ENCODE measurements at regions of chr1 and their contacts with region 1.

Region 1: DNA sequence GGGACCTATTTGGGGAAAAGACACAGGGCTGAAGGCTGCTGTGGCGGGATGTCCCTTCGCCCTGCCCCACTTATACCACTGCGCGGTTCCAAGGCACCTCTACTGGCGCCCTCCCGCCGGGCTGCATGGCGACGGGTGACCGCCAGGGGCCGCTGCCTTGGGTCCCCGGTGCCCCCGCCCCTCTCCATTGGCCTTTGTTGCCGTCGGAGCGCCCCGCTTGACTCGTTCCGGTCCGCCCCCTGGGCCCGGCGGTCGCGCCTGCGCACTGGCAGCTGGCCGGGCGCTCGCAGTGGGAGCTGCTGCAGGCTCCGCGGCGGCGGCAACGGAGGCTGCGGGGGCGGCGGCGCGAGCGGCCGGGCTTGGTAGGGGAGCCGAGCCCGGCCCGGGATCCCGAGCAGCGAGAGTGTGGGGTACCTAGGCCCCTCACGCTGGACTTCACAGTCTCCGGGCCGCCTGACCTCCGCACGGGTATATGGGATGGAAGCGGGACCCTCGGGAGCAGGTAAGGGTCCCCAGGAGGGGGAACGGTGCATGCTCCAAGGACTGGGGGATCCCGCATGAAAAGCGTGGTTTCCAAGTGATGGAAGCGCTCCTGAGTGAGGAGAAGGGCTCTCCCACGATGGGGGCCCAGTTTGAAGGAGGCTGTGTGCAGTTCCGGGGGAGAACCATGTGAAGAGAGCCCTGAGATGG is at the start of gene AGO1:
- DNase-seq: peak; percentile 97 to 99 (median 99)
- ATAC-seq: peak; percentile 79
- H3K4me3 ChIP-seq: peak within 1 kb of the TSS; percentile 64
- H3K27ac ChIP-seq: peak within 1 kb of the TSS; percentile 73
- H3K4me1 ChIP-seq: peaks cover 47 to 72% of the 10 kb centered on the region in 2 experiments
- H3K27me3 ChIP-seq: no peaks in the 10 kb centered on the region
- CTCF ChIP-seq: peak; percentile 95 to 97 (median 97)
- EP300 ChIP-seq: no peak; the same call in 1 of the 2 replicates
- POLR2A ChIP-seq: peak; percentile 51; the same call in 1 of the 2 replicates
- RAD21 ChIP-seq: peak; percentile 56 to 73
- polyA plus RNA-seq, gene AGO1: 7.3 to 13.3 TPM

Region 2: DNA sequence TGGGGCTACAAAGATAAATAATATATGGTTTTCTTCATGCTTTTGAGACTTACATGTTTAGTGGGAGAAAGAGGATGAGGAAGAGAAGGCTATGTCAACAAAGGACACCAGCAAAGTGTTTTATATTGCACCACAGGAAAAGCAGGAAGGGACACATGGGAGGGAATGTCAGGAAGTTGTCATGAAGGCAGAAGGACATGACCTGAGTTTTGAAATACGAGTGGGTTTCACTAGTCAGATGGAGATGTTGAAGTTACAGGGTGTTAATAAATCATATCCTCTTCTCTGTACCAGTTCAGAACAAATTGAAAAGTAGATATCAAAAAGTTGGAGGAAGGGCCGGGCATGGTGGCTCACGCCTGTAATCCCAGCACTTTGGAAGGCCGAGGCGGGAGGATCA is 18.3 kb before region 1 on chr1:
- CTCF ChIA-PET with region 1: no interaction called
- POLR2A ChIA-PET with region 1: interaction called, 19 read pairs
- in situ Hi-C with region 1: no loop called
- intact Hi-C with region 1: loop called (anchors 1 kb)
- DNase-seq: no peak
- ATAC-seq: no peak
- H3K4me3 ChIP-seq: no peak overlapping the region
- H3K27ac ChIP-seq: no peak overlapping the region
- H3K4me1 ChIP-seq: peaks cover 0 to 6% of the 10 kb centered on the region in 2 experiments; a peak in 1 of 5 replicates
- H3K27me3 ChIP-seq: no peaks in the 10 kb centered on the region
- CTCF ChIP-seq: no peak
- EP300 ChIP-seq: no peak
- POLR2A ChIP-seq: no peak
- RAD21 ChIP-seq: no peak

Region 3: DNA sequence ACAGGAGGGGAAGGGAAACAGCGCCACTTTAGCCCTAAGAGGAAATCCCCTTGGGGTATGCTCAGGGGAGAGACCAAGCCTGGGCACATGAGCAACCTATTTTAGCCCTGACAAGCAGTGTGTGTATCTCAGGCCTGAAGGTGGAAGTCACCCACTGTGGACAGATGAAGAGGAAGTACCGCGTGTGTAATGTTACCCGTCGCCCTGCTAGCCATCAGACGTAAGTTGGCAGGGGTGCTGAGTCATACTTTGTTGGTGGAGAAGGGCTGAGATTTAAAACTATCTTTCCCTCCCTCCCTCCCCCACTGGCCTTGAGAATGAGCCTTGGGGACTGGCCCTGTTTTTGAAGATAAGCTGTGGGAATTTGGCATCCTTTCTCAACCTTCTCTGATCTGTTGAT is 11.1 kb after region 1 on chr1:
- CTCF ChIA-PET with region 1: no interaction called
- POLR2A ChIA-PET with region 1: interaction called, 12 read pairs
- in situ Hi-C with region 1: no loop called
- intact Hi-C with region 1: no loop called
- DNase-seq: peak; percentile 65 to 88 (median 74)
- ATAC-seq: peak; percentile 85
- H3K4me3 ChIP-seq: no peak overlapping the region
- H3K27ac ChIP-seq: peak overlapping the region; percentile 5; the same call in 1 of the 3 replicates
- H3K4me1 ChIP-seq: peaks cover 10 to 12% of the 10 kb centered on the region in 2 experiments; a peak in 4 of 5 replicates
- H3K27me3 ChIP-seq: no peaks in the 10 kb centered on the region
- CTCF ChIP-seq: no peak; a peak in 1 of 6 replicates
- EP300 ChIP-seq: no peak
- POLR2A ChIP-seq: no peak
- RAD21 ChIP-seq: no peak